ENCODE measurements at regions of chr11 and their contacts with region 1.

Region 1: GRCh38 chr11:57741132-57742086 is at the start of gene SELENOH:
- DNase-seq: peak; percentile 97
- H3K4me3 ChIP-seq: peak within 1 kb of the TSS; percentile 78 to 94 (median 94)
- H3K27ac ChIP-seq: peak within 1 kb of the TSS; percentile 94 to 99 (median 97)
- H3K4me1 ChIP-seq: peaks cover 7 to 25% (median 11%) of the 10 kb centered on the region in 4 donors
- H3K27me3 ChIP-seq: no peaks in the 10 kb centered on the region
- CTCF ChIP-seq: peak in 1 of 5 experiments; percentile 6
- EP300 ChIP-seq: no peak
- POLR2A ChIP-seq: peak; percentile 93
- total RNA-seq, gene SELENOH: 78.2 to 117 (median 102) TPM

Region 2: DNA sequence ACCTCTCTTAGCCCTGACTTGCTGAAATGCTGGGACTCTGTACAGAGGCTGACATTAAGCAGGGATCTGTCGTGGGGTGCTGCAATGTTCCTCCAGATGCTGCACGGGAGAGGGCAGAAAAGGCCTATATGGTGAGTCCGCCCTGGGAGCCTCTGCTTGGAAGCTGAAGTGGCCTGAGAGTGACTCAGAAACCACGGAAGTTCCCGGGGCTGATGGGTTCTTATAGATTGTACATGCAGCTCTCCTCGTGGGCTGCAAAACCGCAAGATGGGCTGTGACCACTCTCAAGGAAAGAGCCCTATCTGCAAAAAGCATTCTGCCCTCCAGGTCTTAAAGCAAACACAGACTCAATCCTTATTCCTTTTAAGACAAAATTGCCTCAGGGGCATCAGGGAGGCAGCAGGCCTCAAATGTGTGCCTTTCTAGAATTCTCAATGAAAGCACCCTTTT is 308.7 kb before region 1 on chr11:
- in situ Hi-C with region 1: no loop called
- intact Hi-C with region 1: no loop called
- DNase-seq: no peak
- H3K4me3 ChIP-seq: no peak overlapping the region
- H3K27ac ChIP-seq: peak overlapping the region in 1 of 4 donors; percentile 5
- H3K4me1 ChIP-seq: peaks cover 0 to 17% (median 7%) of the 10 kb centered on the region in 4 donors
- H3K27me3 ChIP-seq: no peaks in the 10 kb centered on the region
- CTCF ChIP-seq: no peak
- EP300 ChIP-seq: no peak
- POLR2A ChIP-seq: no peak

Region 3: GRCh38 chr11:57792060-57792541 is 50.7 kb after region 1 on chr11:
- in situ Hi-C with region 1: no loop called
- intact Hi-C with region 1: loop called (anchors 10 kb)
- DNase-seq: peak; percentile 71
- H3K4me3 ChIP-seq: peak overlapping the region in 1 of 4 donors; percentile 34
- H3K27ac ChIP-seq: peak overlapping the region; percentile 88 to 95 (median 92)
- H3K4me1 ChIP-seq: peaks cover 52 to 89% (median 67%) of the 10 kb centered on the region in 4 donors
- H3K27me3 ChIP-seq: no peaks in the 10 kb centered on the region
- CTCF ChIP-seq: no peak
- EP300 ChIP-seq: peak; percentile 95
- POLR2A ChIP-seq: peak; percentile 33

Measured in transverse colon (tissue), 4 donors.